Panc1 (cell line): ENCODE measurements at regions of chr14 and their contacts with region 1.

Region 1: DNA sequence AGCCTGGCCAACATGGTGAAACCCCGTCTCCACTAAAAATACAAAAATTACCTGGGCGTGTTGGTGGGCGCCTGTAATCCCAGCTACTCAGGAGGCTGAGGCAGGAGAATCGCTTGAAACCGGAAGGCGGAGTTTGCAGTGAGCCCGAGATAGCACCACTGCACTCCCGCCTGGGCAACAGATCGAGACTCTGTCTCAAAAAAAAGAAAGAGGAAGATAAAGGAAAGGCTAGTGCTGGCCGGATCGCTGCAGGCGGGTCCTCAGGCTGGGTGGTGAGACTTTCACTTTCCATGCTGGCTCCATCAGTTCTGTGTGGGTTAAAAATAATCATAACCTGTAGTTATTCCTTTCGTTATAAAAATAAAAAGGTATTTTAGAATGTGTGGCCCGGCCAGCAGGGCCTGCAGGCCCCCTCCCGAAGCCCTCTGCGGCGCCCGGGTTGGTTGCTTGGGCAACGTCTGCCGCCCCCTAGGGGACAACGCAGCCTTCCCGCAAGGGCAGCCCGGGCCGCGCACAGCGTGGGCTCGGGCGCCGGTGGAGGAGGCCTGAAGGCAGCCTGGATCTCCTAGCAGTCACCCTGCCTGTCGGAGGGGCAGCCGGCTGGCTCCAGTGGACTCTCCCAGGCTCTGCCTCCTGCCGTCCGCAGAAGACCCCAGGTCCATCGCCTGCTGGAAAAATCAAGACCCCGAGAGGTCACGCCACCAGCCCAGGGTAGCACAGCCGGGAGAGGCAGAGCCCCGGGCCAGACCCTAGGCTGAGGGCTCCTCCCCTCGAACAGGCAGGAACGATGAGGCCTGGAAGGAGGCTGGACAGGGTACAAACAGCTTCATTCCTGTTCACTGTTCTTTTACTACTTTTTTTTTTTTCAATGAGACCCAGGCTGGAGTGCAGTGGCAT is 5.0 kb upstream of the SLC25A47 start:
- DNase-seq: no peak
- ATAC-seq: peak; percentile 95
- H3K4me3 ChIP-seq: peak overlapping the region; percentile 13 to 14; a peak in 3 of 4 replicates
- H3K27ac ChIP-seq: peak overlapping the region; percentile 34; the same call in 1 of the 2 replicates
- H3K4me1 ChIP-seq: no peaks in the 10 kb centered on the region
- H3K27me3 ChIP-seq: no peaks in the 10 kb centered on the region
- CTCF ChIP-seq: peak; percentile 88

Region 2: GRCh38 chr14:100375963-100376735 is 58.0 kb after region 1 on chr14:
- CTCF ChIA-PET with region 1: interaction called, 3 read pairs
- POLR2A ChIA-PET with region 1: no interaction called
- in situ Hi-C with region 1: no loop called
- intact Hi-C with region 1: loop called (anchors 10 kb)
- DNase-seq: no peak
- ATAC-seq: peak; percentile 98
- H3K4me3 ChIP-seq: peak within 1 kb of the TSS; percentile 92
- H3K27ac ChIP-seq: peak within 1 kb of the TSS; percentile 88
- H3K4me1 ChIP-seq: no peaks in the 10 kb centered on the region; the same call in 1 of the 2 replicates
- H3K27me3 ChIP-seq: no peaks in the 10 kb centered on the region
- CTCF ChIP-seq: no peak